ENCODE measurements at regions of chr1 and their contacts with region 1.

Region 1: DNA sequence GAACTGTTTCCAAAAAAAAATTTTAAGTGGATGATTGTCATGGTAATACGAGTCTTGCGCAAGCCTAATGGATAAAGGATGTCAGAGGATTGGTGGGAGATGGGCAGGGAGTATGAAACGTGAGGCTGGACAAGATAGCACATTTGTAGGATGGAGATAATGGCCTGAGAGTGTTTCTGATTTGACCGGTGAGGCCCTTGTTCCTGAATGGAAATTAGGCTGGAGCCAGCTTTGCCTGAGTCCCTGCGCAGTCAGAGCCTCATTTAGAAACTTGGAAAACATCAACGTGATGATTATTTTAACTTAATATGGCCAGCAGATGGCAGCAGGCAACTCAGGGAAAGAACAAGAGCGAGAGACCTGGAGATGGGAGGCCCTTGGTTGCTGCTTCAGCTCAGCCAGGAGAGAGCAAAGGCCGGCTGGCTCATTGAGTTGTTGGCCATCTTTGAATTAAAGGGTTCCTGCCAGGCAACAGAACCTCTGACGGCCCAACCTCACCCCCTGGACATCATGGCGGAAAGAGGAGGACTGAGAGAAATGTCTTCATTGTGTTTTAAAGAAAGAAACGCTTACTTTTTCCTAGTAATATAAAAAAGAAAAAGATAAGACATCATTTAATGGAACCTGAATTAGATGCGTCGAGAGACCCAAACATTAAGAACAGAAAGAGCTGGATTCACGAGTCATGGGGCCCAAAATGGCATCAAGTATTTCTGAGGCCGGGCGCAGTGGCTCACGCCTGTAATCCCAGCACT is 80.3 kb downstream of the SELENOF start:
- DNase-seq: peak; percentile 69 to 89 (median 72)
- ATAC-seq: peak; percentile 96
- H3K4me3 ChIP-seq: no peak overlapping the region
- H3K27ac ChIP-seq: no peak overlapping the region
- H3K4me1 ChIP-seq: no peaks in the 10 kb centered on the region
- H3K27me3 ChIP-seq: no peaks in the 10 kb centered on the region; a peak in 1 of 5 replicates
- CTCF ChIP-seq: peak; percentile 62 to 78 (median 77)
- EP300 ChIP-seq: no peak
- POLR2A ChIP-seq: no peak
- RAD21 ChIP-seq: peak; percentile 77 to 91

Region 2: DNA sequence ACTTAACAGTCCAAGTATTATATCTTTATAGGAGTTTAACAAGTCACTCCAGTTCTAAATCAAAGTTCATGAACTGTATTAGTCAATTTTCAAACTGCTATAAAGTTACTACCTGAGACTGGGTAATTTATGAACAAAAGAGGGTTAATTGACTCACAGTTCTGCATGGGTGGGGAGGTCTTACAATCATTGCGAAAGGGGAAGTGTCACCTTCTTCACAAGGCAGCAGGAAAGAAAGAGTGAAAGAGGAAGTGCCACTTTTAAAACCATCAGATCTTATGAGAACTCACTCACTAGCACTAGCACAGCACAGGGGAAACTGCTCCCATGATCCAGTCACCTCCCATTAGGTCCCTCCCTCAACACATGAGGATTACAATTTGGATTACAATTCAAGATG is 216.8 kb before region 1 on chr1:
- CTCF ChIA-PET with region 1: no interaction called
- POLR2A ChIA-PET with region 1: no interaction called
- in situ Hi-C with region 1: no loop called
- intact Hi-C with region 1: no loop called
- DNase-seq: peak in 1 of 4 experiments; percentile 1
- ATAC-seq: peak; percentile 41; the same call in 2 of the 3 replicates
- H3K4me3 ChIP-seq: no peak overlapping the region
- H3K27ac ChIP-seq: no peak overlapping the region
- H3K4me1 ChIP-seq: no peaks in the 10 kb centered on the region
- H3K27me3 ChIP-seq: no peaks in the 10 kb centered on the region
- CTCF ChIP-seq: no peak
- EP300 ChIP-seq: no peak
- POLR2A ChIP-seq: no peak
- RAD21 ChIP-seq: no peak

Region 3: DNA sequence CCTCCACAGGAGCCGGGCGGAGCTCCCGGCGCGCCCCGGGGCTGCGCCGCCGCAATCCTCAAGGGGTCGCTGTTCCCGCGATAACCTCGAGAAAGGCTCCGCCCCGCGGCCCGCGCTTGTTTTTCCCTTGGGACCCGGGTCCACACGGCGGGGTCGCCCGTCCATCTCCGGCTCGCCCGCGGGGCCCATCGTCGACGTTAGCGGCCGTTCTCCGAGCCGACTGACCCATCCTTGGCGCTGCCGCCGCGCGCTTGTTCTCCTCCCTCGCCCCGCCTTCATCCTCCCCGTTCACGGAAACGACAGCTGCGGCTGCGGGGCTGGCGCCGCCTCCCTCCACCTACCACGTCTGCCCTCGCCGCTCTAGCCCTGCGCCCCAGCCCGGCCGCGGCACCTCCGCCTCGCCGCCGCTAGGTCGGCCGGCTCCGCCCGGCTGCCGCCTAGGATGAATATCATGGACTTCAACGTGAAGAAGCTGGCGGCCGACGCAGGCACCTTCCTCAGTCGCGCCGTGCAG is 129.1 kb before region 1 on chr1 and contains the start of gene SH3GLB1:
- CTCF ChIA-PET with region 1: no interaction called
- POLR2A ChIA-PET with region 1: no interaction called
- in situ Hi-C with region 1: no loop called
- intact Hi-C with region 1: loop called (anchors 10 kb)
- DNase-seq: peak; percentile 83 to 94 (median 84)
- ATAC-seq: peak; percentile 93
- H3K4me3 ChIP-seq: peak within 1 kb of the TSS; percentile 84
- H3K27ac ChIP-seq: peak within 1 kb of the TSS; percentile 87
- H3K4me1 ChIP-seq: peaks cover 12 to 18% of the 10 kb centered on the region in 2 experiments
- H3K27me3 ChIP-seq: no peaks in the 10 kb centered on the region
- CTCF ChIP-seq: peak; percentile 88 to 90 (median 89)
- EP300 ChIP-seq: 0 out of 2 replicates have a peak, but pooled peaks have one; percentile 9
- POLR2A ChIP-seq: peak; percentile 85
- RAD21 ChIP-seq: peak; percentile 49 to 59; a peak in 3 of 4 replicates
- polyA plus RNA-seq, gene SH3GLB1: 10.2 to 10.4 TPM

Region 4: DNA sequence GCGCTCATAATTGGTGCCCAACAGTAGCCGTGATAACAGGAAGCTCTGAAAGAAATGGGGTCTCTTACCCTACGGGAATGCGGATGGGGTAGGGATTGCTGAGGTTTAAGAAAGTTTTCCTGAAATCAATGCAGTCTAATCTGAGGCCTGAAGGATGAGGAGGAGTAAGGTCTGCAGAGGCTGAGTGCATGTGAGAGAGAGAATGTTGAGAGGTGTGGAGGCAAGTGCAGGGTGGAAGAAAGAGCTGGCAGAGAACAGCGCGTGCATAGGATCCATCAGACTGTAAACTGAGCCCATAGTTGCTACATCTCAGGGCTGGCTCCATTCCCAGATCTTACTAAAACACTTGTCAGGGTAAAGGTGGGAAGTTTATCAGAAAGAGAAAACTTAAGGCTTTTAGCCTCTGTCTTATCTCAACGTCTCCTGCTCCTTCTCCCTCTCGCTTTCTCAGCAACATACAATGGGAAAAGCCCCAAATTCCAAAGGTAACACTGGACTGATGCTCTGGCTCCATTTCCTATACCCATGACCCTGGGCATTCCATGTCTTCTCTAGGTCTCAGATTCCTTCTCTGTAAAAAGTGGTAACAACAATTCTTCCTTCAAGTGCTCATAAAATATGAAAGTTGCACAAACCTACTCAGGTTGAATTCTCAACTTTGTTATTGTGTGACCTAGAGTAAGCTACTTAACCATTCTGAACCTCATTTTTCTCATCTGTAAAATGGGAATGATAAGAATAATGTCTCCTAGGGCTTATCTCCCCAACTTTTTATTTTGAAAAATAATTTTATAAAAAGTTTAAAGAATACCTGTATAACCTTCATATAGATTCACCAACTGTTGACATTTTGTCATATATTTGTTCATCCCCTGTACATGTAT is 54.1 kb before region 1 on chr1:
- CTCF ChIA-PET with region 1: no interaction called
- POLR2A ChIA-PET with region 1: no interaction called
- in situ Hi-C with region 1: no loop called
- intact Hi-C with region 1: loop called (anchors 5 kb)
- DNase-seq: peak in 2 of 4 experiments; percentile 25 to 64
- ATAC-seq: peak; percentile 53
- H3K4me3 ChIP-seq: no peak overlapping the region
- H3K27ac ChIP-seq: no peak overlapping the region
- H3K4me1 ChIP-seq: peaks cover 7 to 36% of the 10 kb centered on the region in 2 experiments; a peak in 4 of 5 replicates
- H3K27me3 ChIP-seq: no peaks in the 10 kb centered on the region
- CTCF ChIP-seq: no peak
- EP300 ChIP-seq: peak; percentile 60
- POLR2A ChIP-seq: no peak
- RAD21 ChIP-seq: no peak

Region 5: GRCh38 chr1:86913896-86914634 is 80.4 kb after region 1 on chr1 and contains the start of gene SELENOF:
- CTCF ChIA-PET with region 1: no interaction called
- POLR2A ChIA-PET with region 1: no interaction called
- in situ Hi-C with region 1: no loop called
- intact Hi-C with region 1: loop called (anchors 5 kb)
- DNase-seq: peak; percentile 93 to 99 (median 97)
- ATAC-seq: peak; percentile 87
- H3K4me3 ChIP-seq: peak within 1 kb of the TSS; percentile 92
- H3K27ac ChIP-seq: peak within 1 kb of the TSS; percentile 99
- H3K4me1 ChIP-seq: peaks cover 6 to 10% of the 10 kb centered on the region in 2 experiments; a peak in 4 of 5 replicates
- H3K27me3 ChIP-seq: no peaks in the 10 kb centered on the region
- CTCF ChIP-seq: no peak
- EP300 ChIP-seq: no peak
- POLR2A ChIP-seq: peak; percentile 93
- RAD21 ChIP-seq: 0 out of 4 replicates have a peak, but pooled peaks of 1 of the 2 experiments have one; percentile 23
- polyA plus RNA-seq, gene SELENOF: 371 to 394 TPM

Region 6: GRCh38 chr1:86965012-86965826 is 131.6 kb after region 1 on chr1:
- CTCF ChIA-PET with region 1: interaction called, 15 read pairs
- POLR2A ChIA-PET with region 1: no interaction called
- in situ Hi-C with region 1: no loop called
- intact Hi-C with region 1: loop called (anchors 1 kb)
- DNase-seq: peak in 2 of 4 experiments; percentile 24 to 56
- ATAC-seq: peak; percentile 86
- H3K4me3 ChIP-seq: no peak overlapping the region
- H3K27ac ChIP-seq: no peak overlapping the region
- H3K4me1 ChIP-seq: peaks cover 0 to 6% of the 10 kb centered on the region in 2 experiments; a peak in 1 of 5 replicates
- H3K27me3 ChIP-seq: no peaks in the 10 kb centered on the region
- CTCF ChIP-seq: peak; percentile 61 to 63 (median 62); a peak in 5 of 6 replicates
- EP300 ChIP-seq: no peak
- POLR2A ChIP-seq: no peak
- RAD21 ChIP-seq: peak; percentile 36 to 80; a peak in 3 of 4 replicates

Region 7: DNA sequence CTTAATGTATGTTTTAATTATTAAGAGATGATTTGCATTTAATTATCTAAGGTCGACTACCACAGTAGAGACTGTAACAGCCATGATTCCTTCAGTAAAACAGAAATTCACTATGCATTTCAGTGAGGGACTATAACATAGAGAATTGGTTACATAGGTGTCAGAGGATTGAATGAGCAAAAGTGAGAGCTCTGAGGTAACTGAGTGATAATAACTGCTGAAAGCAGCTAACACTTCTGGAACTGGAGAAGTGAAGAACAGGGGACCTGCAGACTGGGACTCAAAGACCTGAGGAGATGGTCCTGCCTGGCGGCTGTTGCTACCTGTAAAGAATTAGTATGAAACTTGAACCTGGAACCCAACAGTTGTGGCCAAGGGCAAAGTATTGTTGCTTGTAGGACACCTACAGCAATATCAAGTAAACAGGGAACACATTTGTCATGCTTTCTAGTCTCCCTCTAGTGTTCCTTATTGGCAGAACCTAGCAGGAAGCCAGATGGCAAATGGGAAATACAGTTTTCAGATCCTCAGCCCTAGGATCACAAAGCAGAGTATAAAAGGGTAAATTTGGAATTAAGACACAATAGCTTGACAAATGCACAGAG is 191.4 kb after region 1 on chr1:
- CTCF ChIA-PET with region 1: interaction called, 12 read pairs
- POLR2A ChIA-PET with region 1: no interaction called
- in situ Hi-C with region 1: no loop called
- intact Hi-C with region 1: loop called (anchors 2 kb)
- DNase-seq: peak; percentile 29 to 69 (median 46)
- ATAC-seq: peak; percentile 93
- H3K4me3 ChIP-seq: no peak overlapping the region
- H3K27ac ChIP-seq: peak overlapping the region; percentile 40; the same call in 2 of the 3 replicates
- H3K4me1 ChIP-seq: peaks cover 7 to 8% of the 10 kb centered on the region in 2 experiments; a peak in 3 of 5 replicates
- H3K27me3 ChIP-seq: no peaks in the 10 kb centered on the region
- CTCF ChIP-seq: peak; percentile 64 to 83 (median 70)
- EP300 ChIP-seq: peak; percentile 19; the same call in 1 of the 2 replicates
- POLR2A ChIP-seq: no peak
- RAD21 ChIP-seq: peak; percentile 73 to 85

Region 8: DNA sequence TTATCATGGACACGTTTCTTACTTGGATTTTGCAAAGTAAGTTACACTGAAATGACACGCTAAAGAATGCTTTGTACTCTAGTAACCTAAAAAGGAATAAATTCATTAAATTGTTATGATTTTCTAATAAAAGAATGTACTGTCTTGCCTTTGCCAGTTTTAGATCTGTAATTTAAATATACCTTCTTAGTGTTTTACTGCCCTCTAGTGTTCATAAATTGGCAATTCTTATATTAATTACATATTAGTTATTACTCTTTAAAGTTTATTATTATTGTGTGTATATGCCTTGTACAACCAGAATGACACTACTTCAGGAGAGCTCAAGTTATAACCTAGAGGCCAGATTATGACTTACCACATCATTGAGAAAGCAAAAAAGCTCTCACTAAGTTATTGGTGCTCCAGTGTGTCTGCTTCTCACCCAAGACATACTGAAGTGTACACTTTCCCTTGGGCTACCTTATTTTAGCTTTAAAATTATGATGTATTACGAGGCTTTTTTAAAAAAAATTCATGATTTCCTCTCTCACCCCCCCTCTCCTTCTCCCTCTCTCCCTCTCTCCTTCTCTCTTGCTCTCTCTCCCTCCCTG is 250.7 kb after region 1 on chr1:
- CTCF ChIA-PET with region 1: interaction called, 19 read pairs
- POLR2A ChIA-PET with region 1: no interaction called
- in situ Hi-C with region 1: loop called (anchors 5 kb)
- intact Hi-C with region 1: loop called (anchors 1 kb)
- DNase-seq: peak in 1 of 4 experiments; percentile 15
- ATAC-seq: peak; percentile 49; the same call in 1 of the 3 replicates
- H3K4me3 ChIP-seq: no peak overlapping the region
- H3K27ac ChIP-seq: no peak overlapping the region
- H3K4me1 ChIP-seq: no peaks in the 10 kb centered on the region
- H3K27me3 ChIP-seq: no peaks in the 10 kb centered on the region
- CTCF ChIP-seq: peak; percentile 22 to 60 (median 33); a peak in 4 of 6 replicates
- EP300 ChIP-seq: no peak
- POLR2A ChIP-seq: no peak
- RAD21 ChIP-seq: peak; percentile 66 to 71